ENCODE measurements at regions of chr15 and their contacts with region 1.

Region 1: GRCh38 chr15:99476413-99477222 is 89.2 kb upstream of the MEF2A start:
- DNase-seq: peak; percentile 97
- H3K4me3 Mint-ChIP-seq: peak overlapping the region; percentile 61
- H3K27ac Mint-ChIP-seq: peak overlapping the region; percentile 73
- H3K4me1 Mint-ChIP-seq: peaks cover 13% of the 10 kb centered on the region
- H3K27me3 Mint-ChIP-seq: no peaks in the 10 kb centered on the region
- CTCF ChIP-seq: no peak

Region 2: DNA sequence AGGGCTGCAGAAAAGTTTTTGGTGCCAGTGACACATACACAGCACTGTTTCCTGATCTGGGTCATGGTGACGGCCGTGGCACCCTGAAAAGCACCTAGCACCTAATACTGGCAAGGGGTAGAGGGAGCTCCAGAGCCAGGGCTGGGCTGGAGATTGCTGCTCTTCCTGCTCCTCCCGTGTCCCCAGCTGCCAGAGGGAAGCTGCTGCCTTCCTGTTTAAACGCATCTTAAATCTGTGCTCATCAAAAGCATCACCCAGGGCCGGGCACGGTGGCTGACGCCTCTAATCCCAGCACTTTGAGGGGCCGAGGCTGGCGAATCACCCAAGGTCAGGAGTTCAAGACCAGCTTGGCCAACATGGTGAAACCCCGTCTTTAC is 67.5 kb before region 1 on chr15:
- CTCF ChIA-PET with region 1: interaction called, 4 read pairs
- POLR2A ChIA-PET with region 1: no interaction called
- intact Hi-C with region 1: loop called (anchors 2 kb)
- DNase-seq: peak; percentile 74
- H3K4me3 Mint-ChIP-seq: no peak overlapping the region
- H3K27ac Mint-ChIP-seq: no peak overlapping the region
- H3K4me1 Mint-ChIP-seq: peaks cover 12% of the 10 kb centered on the region
- H3K27me3 Mint-ChIP-seq: no peaks in the 10 kb centered on the region
- CTCF ChIP-seq: peak; percentile 56

Region 3: GRCh38 chr15:99452774-99453636 is 23.6 kb before region 1 on chr15:
- CTCF ChIA-PET with region 1: no interaction called
- POLR2A ChIA-PET with region 1: interaction called, 19 read pairs
- intact Hi-C with region 1: loop called (anchors 2 kb)
- DNase-seq: peak; percentile 78
- H3K4me3 Mint-ChIP-seq: peak overlapping the region; percentile 25
- H3K27ac Mint-ChIP-seq: peak overlapping the region; percentile 84
- H3K4me1 Mint-ChIP-seq: peaks cover 52% of the 10 kb centered on the region
- H3K27me3 Mint-ChIP-seq: no peaks in the 10 kb centered on the region
- CTCF ChIP-seq: no peak

Region 4: GRCh38 chr15:99486371-99487336 is 10.0 kb after region 1 on chr15:
- CTCF ChIA-PET with region 1: no interaction called
- POLR2A ChIA-PET with region 1: interaction called, 15 read pairs
- intact Hi-C with region 1: no loop called
- DNase-seq: peak; percentile 79
- H3K4me3 Mint-ChIP-seq: peak overlapping the region; percentile 38
- H3K27ac Mint-ChIP-seq: peak overlapping the region; percentile 65
- H3K4me1 Mint-ChIP-seq: peaks cover 17% of the 10 kb centered on the region
- H3K27me3 Mint-ChIP-seq: no peaks in the 10 kb centered on the region
- CTCF ChIP-seq: no peak

Measured in MCF 10A (cell line).